ENCODE measurements at regions of chrX and their contacts with region 1.

Region 1: DNA sequence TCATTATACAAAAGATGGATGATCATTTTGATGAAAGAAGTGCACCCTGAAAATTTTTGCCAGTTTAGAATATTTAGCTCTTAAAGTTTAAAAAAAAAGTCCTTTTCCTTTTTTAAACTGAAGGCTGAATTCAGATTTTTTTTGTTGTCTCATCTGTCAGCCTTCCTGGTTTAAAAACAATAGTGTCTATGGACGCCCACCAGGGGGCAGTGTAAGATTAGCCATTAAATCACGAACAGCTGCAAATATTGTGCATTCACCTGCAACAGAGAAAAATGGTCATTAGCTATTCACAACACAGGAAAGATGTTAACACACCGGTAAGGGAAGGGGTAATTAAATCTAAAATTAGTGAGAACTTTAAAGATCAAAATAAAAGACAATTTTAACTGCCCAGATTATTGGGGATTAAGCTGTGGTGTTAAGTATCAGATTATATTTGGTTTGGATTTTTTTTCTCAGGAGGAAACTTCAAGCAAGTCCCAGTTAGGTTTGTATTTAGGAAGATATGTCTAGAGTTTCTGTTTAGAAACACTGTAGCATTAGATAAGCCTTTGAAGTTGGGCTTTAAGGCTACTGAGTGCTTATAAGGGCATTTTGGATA is 4.4 kb upstream of the CXorf38 start:
- DNase-seq: peak; percentile 64 to 80 (median 67)
- H3K4me3 ChIP-seq: no peak overlapping the region
- H3K27ac ChIP-seq: no peak overlapping the region
- H3K4me1 ChIP-seq: no peaks in the 10 kb centered on the region
- H3K27me3 ChIP-seq: no peaks in the 10 kb centered on the region
- CTCF ChIP-seq: peak; percentile 81 to 85 (median 84)
- EP300 ChIP-seq: no peak
- POLR2A ChIP-seq: no peak

Region 2: DNA sequence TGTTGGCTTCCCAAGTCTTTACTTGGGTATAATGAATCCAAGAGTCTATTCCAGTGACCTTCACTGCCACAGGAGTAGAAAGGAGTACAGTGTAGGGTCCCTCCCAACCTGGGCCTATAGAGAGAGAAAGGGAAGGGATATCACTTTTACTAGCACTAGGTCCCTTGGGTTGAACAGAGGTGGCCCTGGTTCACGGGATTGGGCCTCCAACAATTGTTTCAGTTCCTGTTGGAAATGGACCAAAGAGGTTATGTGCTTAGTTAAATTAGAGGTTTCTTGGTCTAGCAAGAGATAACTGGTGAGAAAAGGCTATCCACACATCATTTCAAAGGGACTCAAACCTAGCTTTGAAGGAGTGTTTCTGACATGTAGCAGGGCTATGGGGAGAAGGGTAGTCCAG is 140.7 kb after region 1 on chrX:
- intact Hi-C with region 1: loop called in 1 of 4 experiments (anchors 10 kb)
- DNase-seq: no peak
- H3K4me3 ChIP-seq: no peak overlapping the region
- H3K27ac ChIP-seq: no peak overlapping the region
- H3K4me1 ChIP-seq: no peaks in the 10 kb centered on the region
- H3K27me3 ChIP-seq: no peaks in the 10 kb centered on the region
- CTCF ChIP-seq: no peak
- EP300 ChIP-seq: no peak
- POLR2A ChIP-seq: no peak

Region 3: GRCh38 chrX:40816906-40817305 is 165.2 kb after region 1 on chrX:
- intact Hi-C with region 1: no loop called
- DNase-seq: no peak
- H3K4me3 ChIP-seq: no peak overlapping the region
- H3K27ac ChIP-seq: peak overlapping the region in 1 of 2 donors; percentile 4
- H3K4me1 ChIP-seq: no peaks in the 10 kb centered on the region
- H3K27me3 ChIP-seq: no peaks in the 10 kb centered on the region
- CTCF ChIP-seq: no peak
- EP300 ChIP-seq: no peak
- POLR2A ChIP-seq: no peak

Region 4: DNA sequence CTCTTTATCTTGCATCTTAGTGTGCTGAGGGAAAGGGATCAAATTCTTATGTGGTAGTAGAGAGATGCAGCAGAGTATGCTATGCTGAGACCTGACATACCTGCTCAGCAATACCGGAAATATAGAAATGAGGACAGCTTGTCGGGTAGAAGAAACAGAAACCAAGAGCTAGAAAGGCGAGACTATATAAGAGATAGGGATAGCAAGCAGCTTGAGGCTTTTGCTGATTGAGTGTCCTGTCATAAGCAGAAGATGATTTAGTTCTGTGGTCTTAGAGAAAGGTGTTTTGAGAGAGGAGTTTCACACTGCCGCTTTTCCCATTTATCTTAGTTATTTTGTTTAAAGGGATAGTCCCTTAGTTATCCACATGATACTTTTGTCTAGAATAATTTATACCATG is 465.2 kb after region 1 on chrX:
- intact Hi-C with region 1: loop called in 2 of 4 experiments (anchors 10 kb)
- DNase-seq: no peak
- H3K4me3 ChIP-seq: no peak overlapping the region
- H3K27ac ChIP-seq: no peak overlapping the region
- H3K4me1 ChIP-seq: no peaks in the 10 kb centered on the region
- H3K27me3 ChIP-seq: no peaks in the 10 kb centered on the region
- CTCF ChIP-seq: no peak
- EP300 ChIP-seq: no peak
- POLR2A ChIP-seq: no peak

Region 5: DNA sequence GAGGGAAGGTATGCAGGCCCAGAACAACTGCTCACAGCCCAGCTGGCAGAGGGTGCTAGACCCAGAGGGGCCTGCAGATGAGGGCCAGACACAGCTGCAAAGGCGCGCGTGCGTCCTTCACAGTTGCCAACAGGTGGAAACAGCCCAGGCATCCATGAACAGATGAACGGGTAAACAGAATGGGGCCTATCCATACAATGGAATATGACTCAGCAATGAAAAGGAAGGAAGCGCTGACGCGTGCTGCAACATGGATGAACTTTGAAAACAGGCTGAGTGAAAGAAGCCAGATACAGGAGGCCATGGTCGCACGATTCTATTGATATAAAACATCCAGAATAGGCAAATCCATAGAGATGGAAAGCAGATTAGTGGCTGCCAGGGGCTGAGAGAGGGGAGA is 599.1 kb after region 1 on chrX:
- intact Hi-C with region 1: loop called in 1 of 4 experiments (anchors 5 kb)
- DNase-seq: peak in 1 of 5 donors; percentile 12
- H3K4me3 ChIP-seq: no peak overlapping the region
- H3K27ac ChIP-seq: no peak overlapping the region
- H3K4me1 ChIP-seq: peaks cover 6% of the 10 kb centered on the region
- H3K27me3 ChIP-seq: no peaks in the 10 kb centered on the region
- CTCF ChIP-seq: no peak
- EP300 ChIP-seq: no peak
- POLR2A ChIP-seq: no peak